T-cell (primary cell): ENCODE measurements at regions of chr15 and their contacts with region 1.

Region 1: GRCh38 chr15:60520825-60521368 is 42.0 kb upstream of the ICE2 start:
- DNase-seq: peak; percentile 55 to 90 (median 77)
- ATAC-seq: peak; percentile 75 to 80 (median 80)
- H3K4me3 ChIP-seq: no peak overlapping the region
- H3K4me3 Mint-ChIP-seq: no peak overlapping the region
- H3K27ac ChIP-seq: peak overlapping the region; percentile 52
- H3K27ac Mint-ChIP-seq: peak overlapping the region; percentile 66 to 86
- H3K4me1 ChIP-seq: peaks cover 4 to 10% of the 10 kb centered on the region in 2 experiments
- H3K4me1 Mint-ChIP-seq: peaks cover 52 to 73% (median 67%) of the 10 kb centered on the region in 3 donors
- H3K27me3 ChIP-seq: no peaks in the 10 kb centered on the region
- H3K27me3 Mint-ChIP-seq: no peaks in the 10 kb centered on the region

Region 2: GRCh38 chr15:60362321-60363086 is 158.4 kb before region 1 on chr15:
- CTCF ChIA-PET with region 1: interaction called in 1 of 2 experiments, 22 read pairs
- POLR2A ChIA-PET with region 1: no interaction called
- DNase-seq: peak in 1 of 35 experiments; percentile 9
- ATAC-seq: peak; percentile 29 to 70 (median 50)
- H3K4me3 ChIP-seq: no peak overlapping the region
- H3K4me3 Mint-ChIP-seq: no peak overlapping the region
- H3K27ac ChIP-seq: no peak overlapping the region
- H3K27ac Mint-ChIP-seq: peak overlapping the region; percentile 40 to 78
- H3K4me1 ChIP-seq: peaks cover 0 to 5% of the 10 kb centered on the region in 2 experiments
- H3K4me1 Mint-ChIP-seq: peaks cover 11 to 28% (median 25%) of the 10 kb centered on the region in 3 donors
- H3K27me3 ChIP-seq: no peaks in the 10 kb centered on the region
- H3K27me3 Mint-ChIP-seq: no peaks in the 10 kb centered on the region

Region 3: GRCh38 chr15:60444289-60444912 is 76.5 kb before region 1 on chr15:
- CTCF ChIA-PET with region 1: no interaction called
- POLR2A ChIA-PET with region 1: no interaction called
- DNase-seq: peak in 1 of 35 experiments; percentile 14
- ATAC-seq: no peak
- H3K4me3 ChIP-seq: no peak overlapping the region
- H3K4me3 Mint-ChIP-seq: no peak overlapping the region
- H3K27ac ChIP-seq: no peak overlapping the region
- H3K27ac Mint-ChIP-seq: peak overlapping the region in 1 of 2 donors; percentile 6
- H3K4me1 ChIP-seq: no peaks in the 10 kb centered on the region
- H3K4me1 Mint-ChIP-seq: peaks cover 4 to 7% (median 4%) of the 10 kb centered on the region in 3 donors
- H3K27me3 ChIP-seq: no peaks in the 10 kb centered on the region
- H3K27me3 Mint-ChIP-seq: no peaks in the 10 kb centered on the region

Region 4: GRCh38 chr15:60531801-60532200 is 10.9 kb after region 1 on chr15:
- CTCF ChIA-PET with region 1: interaction called, 8 to 10 read pairs
- POLR2A ChIA-PET with region 1: interaction called, 5 to 8 read pairs
- DNase-seq: no peak
- ATAC-seq: no peak
- H3K4me3 ChIP-seq: no peak overlapping the region
- H3K4me3 Mint-ChIP-seq: no peak overlapping the region
- H3K27ac ChIP-seq: no peak overlapping the region
- H3K27ac Mint-ChIP-seq: peak overlapping the region; percentile 41 to 48
- H3K4me1 ChIP-seq: peaks cover 3 to 37% of the 10 kb centered on the region in 2 experiments
- H3K4me1 Mint-ChIP-seq: peaks cover 78 to 93% (median 93%) of the 10 kb centered on the region in 3 donors
- H3K27me3 ChIP-seq: no peaks in the 10 kb centered on the region
- H3K27me3 Mint-ChIP-seq: no peaks in the 10 kb centered on the region

Region 5: GRCh38 chr15:60548101-60548500 is 27.2 kb after region 1 on chr15:
- CTCF ChIA-PET with region 1: interaction called, 5 to 27 read pairs
- POLR2A ChIA-PET with region 1: interaction called in 1 of 2 experiments, 8 read pairs
- DNase-seq: peak in 5 of 35 experiments; percentile 21 to 63 (median 29)
- ATAC-seq: peak; percentile 61 to 79 (median 74)
- H3K4me3 ChIP-seq: peak overlapping the region in 1 of 2 donors; percentile 7
- H3K4me3 Mint-ChIP-seq: peak overlapping the region; percentile 57 to 66 (median 65)
- H3K27ac ChIP-seq: peak overlapping the region; percentile 85
- H3K27ac Mint-ChIP-seq: peak overlapping the region; percentile 94 to 95
- H3K4me1 ChIP-seq: peaks cover 49 to 70% of the 10 kb centered on the region in 2 experiments
- H3K4me1 Mint-ChIP-seq: peaks cover 97 to 98% (median 97%) of the 10 kb centered on the region in 3 donors
- H3K27me3 ChIP-seq: no peaks in the 10 kb centered on the region
- H3K27me3 Mint-ChIP-seq: no peaks in the 10 kb centered on the region

Region 6: GRCh38 chr15:60580650-60581376 is 59.9 kb after region 1 on chr15:
- CTCF ChIA-PET with region 1: interaction called, 4 to 19 read pairs
- POLR2A ChIA-PET with region 1: interaction called, 3 to 5 read pairs
- DNase-seq: peak in 28 of 35 experiments; percentile 32 to 88 (median 58)
- ATAC-seq: peak; percentile 83 to 92 (median 88)
- H3K4me3 ChIP-seq: peak overlapping the region; percentile 12 to 25
- H3K4me3 Mint-ChIP-seq: peak overlapping the region; percentile 68 to 70 (median 70)
- H3K27ac ChIP-seq: peak overlapping the region; percentile 87
- H3K27ac Mint-ChIP-seq: peak overlapping the region; percentile 96 to 97
- H3K4me1 ChIP-seq: peaks cover 50 to 66% of the 10 kb centered on the region in 2 experiments
- H3K4me1 Mint-ChIP-seq: peaks cover 84 to 95% (median 93%) of the 10 kb centered on the region in 3 donors
- H3K27me3 ChIP-seq: no peaks in the 10 kb centered on the region
- H3K27me3 Mint-ChIP-seq: no peaks in the 10 kb centered on the region

Region 7: GRCh38 chr15:61091289-61091616 is 570.4 kb after region 1 on chr15:
- CTCF ChIA-PET with region 1: no interaction called
- POLR2A ChIA-PET with region 1: no interaction called
- DNase-seq: no peak
- ATAC-seq: no peak
- H3K4me3 ChIP-seq: no peak overlapping the region
- H3K4me3 Mint-ChIP-seq: no peak overlapping the region
- H3K27ac ChIP-seq: no peak overlapping the region
- H3K27ac Mint-ChIP-seq: no peak overlapping the region
- H3K4me1 ChIP-seq: no peaks in the 10 kb centered on the region
- H3K4me1 Mint-ChIP-seq: no peaks in the 10 kb centered on the region
- H3K27me3 ChIP-seq: peaks cover 0 to 2% of the 10 kb centered on the region in 2 experiments
- H3K27me3 Mint-ChIP-seq: peaks cover 10 to 24% of the 10 kb centered on the region in 2 donors